Posterior vena cava (tissue), 2 donors: ENCODE measurements at regions of chr2 and their contacts with region 1.

Region 1: DNA sequence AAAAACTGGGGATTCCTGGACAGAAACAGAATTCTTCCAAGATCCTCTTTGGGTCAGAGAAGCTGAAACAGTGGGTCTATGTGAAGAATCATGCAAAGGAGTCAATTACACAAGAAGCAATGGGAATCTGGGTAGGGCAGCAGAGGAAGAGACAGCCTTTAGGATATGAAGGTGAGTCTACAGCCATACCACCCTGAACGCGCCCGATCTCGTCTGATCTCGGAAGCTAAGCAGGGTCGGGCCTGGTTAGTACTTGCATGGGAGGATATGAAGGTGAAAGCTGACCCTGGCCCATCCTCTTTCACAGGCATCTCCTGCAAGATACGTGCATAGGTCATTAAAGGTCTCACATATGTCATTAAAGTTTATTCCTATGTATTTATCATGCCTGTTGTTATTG is 1080.9 kb upstream of the FANCL start:
- DNase-seq: no peak

Region 2: GRCh38 chr2:58283931-58284330 is 1038.1 kb before region 1 on chr2:
- intact Hi-C with region 1: no loop called
- DNase-seq: no peak

Region 3: DNA sequence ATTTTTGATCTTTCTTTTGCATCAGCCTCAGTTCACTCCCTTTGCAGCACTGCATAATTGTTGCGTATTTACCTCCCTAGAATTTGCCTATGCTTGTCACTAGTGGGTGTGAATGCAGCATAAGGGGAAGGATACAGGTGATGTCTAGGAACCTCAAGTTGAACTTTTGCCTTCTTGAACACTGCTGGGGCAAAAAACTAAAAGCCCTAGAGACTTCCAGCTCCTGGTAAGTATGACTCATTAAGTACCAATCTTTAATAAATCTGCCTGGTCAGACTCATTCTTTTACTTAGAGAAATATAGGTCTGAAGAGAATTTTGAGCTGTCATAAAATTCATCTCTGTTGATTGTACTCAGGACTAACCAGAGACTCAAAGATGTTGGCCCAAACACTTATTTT is 533.6 kb before region 1 on chr2:
- intact Hi-C with region 1: no loop called
- DNase-seq: no peak

Region 4: DNA sequence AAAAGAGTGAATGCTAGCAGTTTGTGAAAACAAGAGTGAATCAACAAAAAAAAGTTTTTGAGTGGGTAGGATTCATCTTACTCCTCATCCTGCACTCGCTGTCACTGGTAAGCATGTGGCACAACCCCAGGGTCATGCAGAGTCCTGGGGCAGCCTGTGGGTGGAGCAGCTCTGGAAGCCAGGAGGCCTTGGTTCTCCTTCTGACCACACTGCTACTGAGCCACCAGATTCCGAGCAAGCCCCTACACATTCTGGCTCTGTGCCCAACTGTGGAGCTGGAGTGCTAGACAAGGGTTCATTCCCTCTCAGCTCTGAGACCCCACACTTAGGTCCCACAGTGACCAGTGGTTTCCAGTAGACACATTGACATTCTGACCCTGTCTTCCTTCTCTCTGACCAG is 560.8 kb after region 1 on chr2:
- intact Hi-C with region 1: loop called in 1 of 2 experiments (anchors 5 kb)
- DNase-seq: no peak